IMR-90 (cell line): ENCODE measurements at regions of chrX and their contacts with region 1.

Region 1: GRCh38 chrX:129613596-129613995 is 41.2 kb downstream of the APLN start:
- DNase-seq: no peak
- ATAC-seq: no peak
- H3K4me3 ChIP-seq: no peak overlapping the region
- H3K27ac ChIP-seq: no peak overlapping the region
- H3K4me1 ChIP-seq: no peaks in the 10 kb centered on the region
- H3K27me3 ChIP-seq: peaks cover 11% of the 10 kb centered on the region
- CTCF ChIP-seq: no peak
- POLR2A ChIP-seq: no peak
- RAD21 ChIP-seq: no peak

Region 2: GRCh38 chrX:129726307-129727111 is 112.9 kb after region 1 on chrX:
- CTCF ChIA-PET with region 1: interaction called, 7 read pairs
- POLR2A ChIA-PET with region 1: no interaction called
- dilution Hi-C with region 1: no loop called
- in situ Hi-C with region 1: loop called (anchors 5 kb)
- intact Hi-C with region 1: no loop called
- DNase-seq: peak; percentile 69
- ATAC-seq: peak; percentile 93
- H3K4me3 ChIP-seq: no peak overlapping the region
- H3K27ac ChIP-seq: no peak overlapping the region
- H3K4me1 ChIP-seq: no peaks in the 10 kb centered on the region
- H3K27me3 ChIP-seq: peaks cover 20% of the 10 kb centered on the region
- CTCF ChIP-seq: peak; percentile 74
- POLR2A ChIP-seq: no peak
- RAD21 ChIP-seq: peak; percentile 91

Region 3: GRCh38 chrX:131082325-131082740 is 1468.7 kb after region 1 on chrX:
- CTCF ChIA-PET with region 1: no interaction called
- POLR2A ChIA-PET with region 1: no interaction called
- dilution Hi-C with region 1: no loop called
- in situ Hi-C with region 1: no loop called
- intact Hi-C with region 1: no loop called
- DNase-seq: no peak
- ATAC-seq: no peak
- H3K4me3 ChIP-seq: no peak overlapping the region
- H3K27ac ChIP-seq: no peak overlapping the region
- H3K4me1 ChIP-seq: no peaks in the 10 kb centered on the region
- H3K27me3 ChIP-seq: peaks cover 3% of the 10 kb centered on the region
- CTCF ChIP-seq: no peak
- POLR2A ChIP-seq: no peak
- RAD21 ChIP-seq: no peak